ENCODE measurements at regions of chr2 and their contacts with region 1.

Region 1: DNA sequence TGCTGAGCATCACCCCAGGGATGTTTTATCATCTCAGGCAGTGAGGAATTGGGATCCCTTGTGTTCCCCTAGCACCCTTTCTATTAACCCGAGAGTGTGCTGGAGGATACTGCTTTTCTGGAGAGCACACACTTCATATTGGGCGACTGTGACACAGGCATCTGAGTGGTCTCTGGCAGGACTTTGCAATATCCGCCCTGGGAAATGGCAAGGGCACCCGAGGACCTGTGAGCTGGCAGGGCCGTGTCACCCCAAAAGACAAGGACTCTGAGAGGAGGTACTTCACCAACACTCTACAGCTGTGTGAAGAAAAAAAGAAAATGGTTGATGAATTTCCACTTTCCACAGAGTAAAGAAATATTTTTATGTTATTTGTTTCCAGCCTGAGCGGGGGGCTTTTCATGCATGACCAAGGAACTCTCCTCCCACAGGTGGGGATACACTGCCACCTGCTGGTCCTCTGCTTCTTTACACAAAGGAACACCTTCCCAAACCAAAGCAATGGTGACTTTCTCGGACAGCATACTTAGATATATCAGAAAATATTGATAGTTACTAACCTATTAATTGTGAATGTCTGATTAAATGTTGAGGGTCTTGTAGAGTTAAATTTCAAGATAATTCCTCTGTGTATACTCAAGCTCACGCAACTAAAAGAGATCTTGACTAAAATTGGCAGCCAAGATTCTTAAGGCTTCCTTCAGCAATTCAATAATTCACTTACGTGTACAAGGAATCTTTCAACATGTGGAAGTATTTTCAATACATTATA is 45.9 kb upstream of the REG3G start:
- DNase-seq: peak; percentile 43
- CTCF ChIP-seq: peak; percentile 66

Region 2: GRCh38 chr2:78676921-78677696 is 302.5 kb before region 1 on chr2:
- CTCF ChIA-PET with region 1: interaction called, 10 read pairs
- POLR2A ChIA-PET with region 1: no interaction called
- DNase-seq: no peak
- CTCF ChIP-seq: no peak

Region 3: DNA sequence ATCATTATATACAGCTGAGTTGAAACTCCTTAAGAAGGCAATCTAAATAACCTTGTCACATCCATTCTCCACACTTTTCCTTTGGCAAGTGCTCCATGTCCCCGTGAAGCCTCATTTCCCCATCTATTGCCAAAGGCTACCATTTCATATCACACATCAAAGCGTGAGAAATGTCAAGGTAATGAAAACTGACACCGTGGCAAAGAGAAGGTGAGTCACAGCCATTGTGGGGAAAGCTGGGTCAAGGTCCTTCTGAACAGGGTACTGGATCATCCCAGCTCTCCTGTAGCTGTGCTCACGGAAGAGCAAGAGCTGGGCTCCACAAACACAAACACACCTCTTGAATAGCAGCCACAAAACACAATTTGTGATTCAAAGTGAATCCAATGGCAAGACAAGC is 12.3 kb before region 1 on chr2:
- CTCF ChIA-PET with region 1: interaction called, 17 read pairs
- POLR2A ChIA-PET with region 1: no interaction called
- DNase-seq: no peak
- CTCF ChIP-seq: no peak

Region 4: GRCh38 chr2:78999406-78999805 is 19.8 kb after region 1 on chr2:
- CTCF ChIA-PET with region 1: interaction called, 10 read pairs
- POLR2A ChIA-PET with region 1: no interaction called
- DNase-seq: no peak
- CTCF ChIP-seq: peak; percentile 29

Measured in GM10248 (cell line).